Sciatic nerve (tissue), 2 donors: ENCODE measurements at regions of chr11 and their contacts with region 1.

Region 1: GRCh38 chr11:57376095-57377090 is 4.6 kb downstream of the PRG3 start:
- DNase-seq: no peak
- ATAC-seq: no peak

Region 2: GRCh38 chr11:56307836-56308235 is 1068.6 kb before region 1 on chr11:
- intact Hi-C with region 1: no loop called
- DNase-seq: no peak
- ATAC-seq: peak; percentile 13

Region 3: GRCh38 chr11:57205041-57205671 is 171.2 kb before region 1 on chr11:
- intact Hi-C with region 1: no loop called
- DNase-seq: no peak
- ATAC-seq: peak; percentile 7

Region 4: GRCh38 chr11:57414612-57415212 is 38.3 kb after region 1 on chr11:
- intact Hi-C with region 1: loop called (anchors 1 kb)
- DNase-seq: no peak
- ATAC-seq: no peak

Region 5: GRCh38 chr11:57614234-57614772 is 237.9 kb after region 1 on chr11:
- intact Hi-C with region 1: no loop called
- DNase-seq: no peak
- ATAC-seq: peak; percentile 10